H1 (cell line): ENCODE measurements at regions of chr16 and their contacts with region 1.

Region 1: DNA sequence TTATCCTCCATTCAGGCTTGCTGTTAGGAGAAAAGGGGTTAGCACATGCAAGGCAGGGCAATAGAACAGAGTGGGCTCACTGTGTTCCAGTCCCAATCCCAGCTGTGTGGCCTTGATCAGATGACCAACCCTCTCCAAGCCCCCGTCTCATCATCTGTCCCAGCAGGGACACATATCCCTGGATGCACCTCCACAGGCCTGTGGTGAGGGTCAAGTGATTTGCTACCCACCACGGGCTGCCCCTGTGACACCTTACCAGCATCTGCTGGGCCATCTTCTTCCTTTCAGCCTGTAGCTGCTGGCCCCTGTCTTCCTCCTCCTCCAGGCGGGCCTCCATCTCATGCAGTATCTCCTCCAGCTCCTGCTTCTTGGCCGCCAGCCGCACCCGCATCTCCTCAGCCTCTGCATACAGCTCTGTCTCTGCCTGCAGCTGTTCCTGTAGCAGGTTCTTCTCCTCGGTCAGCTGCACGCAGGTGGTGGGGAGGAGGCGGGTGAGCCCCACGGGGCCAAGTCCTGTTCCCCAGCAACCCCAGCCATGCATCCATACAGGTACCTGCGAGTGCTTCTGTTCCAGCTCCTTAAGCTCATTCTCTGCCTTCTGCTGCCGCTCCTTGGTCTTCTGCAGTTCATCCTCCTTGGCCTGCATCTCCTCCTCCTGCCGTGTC is 91.3 kb downstream of the NDE1 start:
- DNase-seq: no peak
- H3K4me3 ChIP-seq: no peak overlapping the region
- H3K27ac ChIP-seq: no peak overlapping the region
- H3K4me1 ChIP-seq: no peaks in the 10 kb centered on the region; a peak in 1 of 7 replicates
- H3K27me3 ChIP-seq: no peaks in the 10 kb centered on the region
- CTCF ChIP-seq: no peak
- EP300 ChIP-seq: no peak
- POLR2A ChIP-seq: no peak
- RAD21 ChIP-seq: no peak

Region 2: GRCh38 chr16:15757630-15758251 is 16.4 kb after region 1 on chr16:
- CTCF ChIA-PET with region 1: interaction called, 10 read pairs
- POLR2A ChIA-PET with region 1: no interaction called
- DNase-seq: peak in 1 of 2 experiments; percentile 55
- H3K4me3 ChIP-seq: no peak overlapping the region
- H3K27ac ChIP-seq: no peak overlapping the region
- H3K4me1 ChIP-seq: peaks cover 0 to 2% (median under 1%) of the 10 kb centered on the region in 4 experiments; a peak in 1 of 7 replicates
- H3K27me3 ChIP-seq: no peaks in the 10 kb centered on the region
- CTCF ChIP-seq: no peak
- EP300 ChIP-seq: no peak
- POLR2A ChIP-seq: no peak
- RAD21 ChIP-seq: no peak